Cardiac septum (tissue), 1 donor: ENCODE measurements at regions of chr2 and their contacts with region 1.

Region 1: DNA sequence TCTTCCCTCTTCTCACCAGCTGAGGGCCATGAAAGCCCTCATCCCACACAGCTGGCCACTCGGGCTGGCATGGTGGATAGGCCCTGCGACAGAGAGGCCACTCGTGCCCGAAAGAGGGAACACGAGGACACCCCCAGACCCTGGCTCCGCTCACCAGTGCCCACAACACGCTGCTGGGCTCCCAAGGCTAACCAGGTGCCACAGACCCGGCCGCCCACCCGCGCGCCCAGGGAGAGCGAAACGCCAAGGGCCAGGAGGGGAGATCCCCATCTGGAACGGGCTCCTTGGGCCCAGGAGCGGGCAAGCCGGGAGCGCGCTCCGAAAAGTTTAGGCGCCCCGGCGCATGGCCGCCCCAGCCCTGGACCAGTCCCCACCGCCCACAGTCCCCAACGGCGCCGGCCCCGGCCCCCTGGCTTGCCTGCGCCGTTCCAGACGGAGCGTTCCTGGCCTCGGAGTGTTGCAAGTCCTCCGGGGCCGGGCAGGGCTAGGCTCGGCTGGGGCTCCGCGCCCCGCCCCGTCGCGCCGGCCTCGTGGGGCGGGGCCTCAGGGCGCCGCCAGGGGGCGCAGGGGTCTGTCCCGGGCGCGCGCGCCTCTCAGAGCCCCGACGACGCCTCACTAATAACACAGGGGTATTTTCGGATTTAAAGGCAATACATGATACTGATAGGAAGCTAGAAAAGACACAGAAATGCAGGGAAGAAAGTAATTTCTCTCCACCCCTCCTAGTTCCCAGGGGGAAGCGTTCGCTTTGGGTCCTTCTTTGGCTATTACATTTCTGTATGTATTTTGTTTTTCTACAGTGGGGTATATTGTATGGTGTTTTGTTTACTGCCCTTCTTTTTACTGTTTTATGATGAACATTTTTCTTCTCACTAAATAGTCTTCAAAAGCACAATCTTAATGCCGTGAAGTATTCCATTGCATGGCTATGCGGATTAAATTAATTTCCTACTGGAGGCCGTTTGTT is at the start of gene TMBIM1:
- DNase-seq: peak; percentile 91
- total RNA-seq, gene TMBIM1: 143 TPM

Region 2: DNA sequence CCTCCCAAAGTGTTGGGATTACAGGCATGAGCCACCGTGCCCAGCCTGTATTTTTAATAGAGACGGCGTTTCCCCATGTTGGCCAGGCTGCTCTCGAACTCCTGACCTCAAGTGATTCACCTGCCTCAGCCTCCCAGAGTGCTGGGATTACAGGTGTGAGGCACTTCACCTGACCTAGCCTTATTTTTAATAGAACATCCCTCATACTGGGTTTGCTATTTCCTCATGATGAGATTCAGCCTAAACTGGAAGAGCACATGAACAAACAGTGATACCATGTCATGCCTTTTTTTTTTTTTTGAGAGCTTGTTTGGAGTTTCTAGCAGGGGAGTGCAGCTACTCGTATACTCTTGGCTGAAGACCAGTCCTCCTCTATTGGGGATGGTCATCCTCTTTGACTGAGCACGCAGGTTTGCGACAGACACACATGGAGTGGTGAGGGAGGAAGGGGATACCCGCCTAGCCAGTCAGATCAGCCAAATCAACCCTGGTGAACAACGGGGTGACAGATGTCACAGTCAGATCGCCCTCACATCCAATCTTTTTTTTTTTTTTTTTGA is 208.2 kb after region 1 on chr2:
- intact Hi-C with region 1: no loop called
- DNase-seq: no peak

Region 3: DNA sequence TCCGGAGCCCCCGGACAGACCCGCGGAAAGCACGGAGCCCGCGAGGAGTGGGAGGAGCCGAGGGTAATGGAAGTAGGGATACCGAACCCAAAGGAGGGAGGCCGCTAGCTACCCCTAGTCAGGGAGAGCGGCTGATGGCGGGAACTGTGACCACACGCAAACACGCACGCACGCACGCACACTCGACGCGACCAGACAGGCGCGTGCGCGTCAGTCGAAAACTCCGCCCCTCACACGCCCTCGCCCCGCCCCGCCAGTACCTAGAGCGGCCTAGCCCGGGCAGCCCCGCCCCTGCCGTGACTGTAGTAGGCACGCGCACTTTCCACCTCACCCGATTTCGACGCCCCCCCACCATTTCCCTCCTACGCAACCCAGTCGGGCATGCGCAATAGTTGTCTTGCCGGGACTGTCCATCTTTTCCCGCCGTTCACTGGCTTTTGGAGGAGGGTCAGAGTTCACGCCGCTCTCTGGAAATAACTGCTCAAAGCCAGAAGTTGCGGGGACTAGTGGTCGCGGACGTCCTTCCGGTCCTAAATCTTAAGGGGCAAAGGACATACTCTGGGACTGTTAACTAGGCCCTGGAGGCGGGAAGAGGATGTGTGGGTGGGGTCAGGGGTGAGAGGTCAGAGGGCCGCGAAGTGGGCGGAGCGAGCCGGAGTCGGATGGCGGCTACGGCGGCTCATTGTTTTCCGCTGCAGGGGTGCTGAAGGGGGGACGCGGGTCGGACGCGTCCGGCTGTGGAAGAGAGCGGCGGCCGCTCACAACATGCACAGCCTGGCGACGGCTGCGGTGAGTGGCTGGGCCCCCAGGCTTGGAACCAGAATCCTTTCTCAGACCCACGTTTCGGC is 276.1 kb after region 1 on chr2 and contains the starts of genes CNOT9 and USP37:
- intact Hi-C with region 1: loop called (anchors 5 kb)
- DNase-seq: peak; percentile 100
- total RNA-seq, gene CNOT9: 20.9 TPM
- total RNA-seq, gene USP37: 7.1 TPM

Region 4: GRCh38 chr2:218648088-218648786 is 355.9 kb after region 1 on chr2:
- intact Hi-C with region 1: loop called (anchors 10 kb)
- DNase-seq: no peak